Mammary epithelial cell (primary cell): ENCODE measurements at regions of chr16 and their contacts with region 1.

Region 1: DNA sequence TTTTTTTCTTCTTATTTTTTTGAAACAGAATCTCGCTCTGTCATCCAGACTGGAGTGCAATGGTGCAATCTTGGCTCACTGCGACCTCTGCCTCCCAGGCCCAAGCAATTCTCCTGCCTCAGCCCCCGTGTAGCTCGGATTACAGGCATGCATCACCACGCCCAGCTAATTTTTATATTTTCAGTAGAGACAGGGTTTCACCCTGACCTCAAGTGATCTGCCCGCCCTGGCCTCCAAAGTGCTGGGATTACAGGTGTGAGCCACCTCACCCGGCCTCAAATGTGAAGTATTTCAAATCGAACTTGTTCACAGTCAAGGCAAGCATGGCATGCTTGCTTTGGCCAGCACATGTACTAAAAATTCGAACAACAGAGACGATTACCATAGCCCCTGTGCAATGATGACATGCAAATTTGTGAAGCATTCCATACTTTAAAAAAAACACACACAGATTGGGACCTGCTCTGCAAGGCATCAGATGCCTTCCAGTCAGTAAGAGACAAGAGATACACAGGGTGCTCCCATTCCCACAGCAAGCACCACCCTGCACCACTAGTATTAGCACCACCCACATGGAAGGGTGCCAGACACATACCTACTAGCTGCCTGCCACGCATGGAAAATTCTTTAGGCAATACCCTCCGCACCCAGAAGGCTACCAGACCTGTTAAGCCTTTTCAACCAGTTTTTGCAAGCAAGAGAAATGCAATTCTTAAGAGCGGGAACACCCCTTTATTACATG is 47.2 kb downstream of the ANKRD11 start:
- DNase-seq: peak; percentile 88
- H3K4me3 ChIP-seq: peak overlapping the region in 1 of 3 experiments; percentile 24
- H3K27ac ChIP-seq: peak overlapping the region; percentile 93
- H3K4me1 ChIP-seq: peaks cover 47% of the 10 kb centered on the region
- H3K27me3 ChIP-seq: no peaks in the 10 kb centered on the region
- CTCF ChIP-seq: peak; percentile 25 to 48

Region 2: DNA sequence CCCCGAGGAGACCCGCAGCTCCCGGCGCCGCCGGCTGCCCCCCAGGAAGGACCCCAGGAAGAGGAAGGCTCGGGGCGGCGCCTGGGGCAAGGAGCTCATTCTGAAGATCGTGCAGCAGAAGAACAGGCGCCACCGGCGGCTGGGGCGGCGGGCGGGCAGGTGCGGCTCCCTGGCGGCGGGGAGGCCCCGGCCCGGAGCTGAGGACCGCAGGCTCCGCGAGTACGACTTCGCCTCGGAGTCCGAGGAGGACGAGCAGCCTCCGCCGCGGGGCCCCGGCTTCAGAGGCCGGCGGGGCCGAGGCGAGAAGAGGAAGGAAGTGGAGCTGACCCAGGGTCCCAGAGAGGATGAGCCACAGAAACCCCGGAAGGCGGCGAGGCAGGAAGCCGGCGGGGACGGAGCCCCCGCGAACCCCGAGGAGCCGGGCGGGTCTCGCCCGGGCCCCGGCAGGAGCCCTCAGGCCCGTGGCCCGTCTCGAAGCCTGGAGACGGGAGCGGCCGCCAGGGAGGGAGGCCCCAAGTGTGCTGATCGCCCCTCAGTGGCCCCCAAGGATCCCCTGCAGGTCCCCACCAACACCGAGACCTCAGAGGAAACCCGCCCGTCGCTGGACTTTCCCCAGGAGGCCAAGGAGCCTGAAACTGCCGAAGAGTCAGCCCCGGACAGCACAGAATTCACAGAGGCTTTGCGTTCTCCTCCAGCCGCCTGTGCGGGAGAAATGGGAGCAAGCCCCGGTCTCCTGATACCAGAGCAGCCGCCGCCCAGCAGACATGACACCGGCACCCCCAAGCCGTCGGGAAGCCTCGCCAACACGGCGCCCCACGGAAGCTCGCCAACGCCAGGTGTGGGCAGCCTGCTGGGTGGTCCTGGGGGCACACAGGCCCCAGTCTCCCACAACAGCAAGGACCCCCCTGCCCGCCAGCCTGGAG is 1012.4 kb before region 1 on chr16:
- CTCF ChIA-PET with region 1: no interaction called
- dilution Hi-C with region 1: no loop called
- in situ Hi-C with region 1: no loop called
- intact Hi-C with region 1: no loop called
- DNase-seq: no peak
- H3K4me3 ChIP-seq: no peak overlapping the region
- H3K27ac ChIP-seq: no peak overlapping the region
- H3K4me1 ChIP-seq: no peaks in the 10 kb centered on the region
- H3K27me3 ChIP-seq: peaks cover 1% of the 10 kb centered on the region
- CTCF ChIP-seq: no peak

Region 3: DNA sequence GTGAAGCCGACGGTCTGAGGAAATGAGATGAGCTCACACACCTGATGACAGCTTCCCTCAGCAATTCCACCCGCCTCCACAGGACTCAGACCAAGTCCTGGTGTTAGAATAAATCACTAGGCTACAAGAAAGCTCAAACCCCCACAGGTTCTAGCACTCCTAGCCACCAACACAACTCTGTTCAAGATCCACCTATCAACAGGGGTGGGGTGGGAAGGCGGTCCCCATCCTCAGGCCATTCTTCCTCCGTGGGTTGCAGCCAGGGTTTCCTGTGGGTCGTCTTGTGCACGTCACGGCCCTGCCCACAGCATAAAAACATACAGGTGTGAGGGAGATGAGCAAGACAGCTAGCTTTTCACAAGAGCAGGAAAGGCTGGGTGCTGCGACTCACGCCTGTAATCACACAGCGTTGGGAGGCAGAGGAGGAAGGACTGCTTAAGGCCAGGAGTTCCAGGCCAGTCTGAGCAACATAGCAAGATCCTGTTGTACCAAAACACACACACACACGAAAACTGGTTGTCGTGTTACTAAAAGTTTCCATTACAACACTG is 33.9 kb before region 1 on chr16:
- CTCF ChIA-PET with region 1: no interaction called
- dilution Hi-C with region 1: no loop called
- in situ Hi-C with region 1: no loop called
- intact Hi-C with region 1: loop called (anchors 2 kb)
- DNase-seq: peak; percentile 79
- H3K4me3 ChIP-seq: no peak overlapping the region
- H3K27ac ChIP-seq: peak overlapping the region; percentile 48
- H3K4me1 ChIP-seq: peaks cover 44% of the 10 kb centered on the region
- H3K27me3 ChIP-seq: no peaks in the 10 kb centered on the region
- CTCF ChIP-seq: no peak

Region 4: GRCh38 chr16:89458551-89458950 is 15.4 kb after region 1 on chr16:
- CTCF ChIA-PET with region 1: no interaction called
- dilution Hi-C with region 1: no loop called
- in situ Hi-C with region 1: no loop called
- intact Hi-C with region 1: loop called (anchors 2 kb)
- DNase-seq: peak; percentile 92
- H3K4me3 ChIP-seq: no peak overlapping the region
- H3K27ac ChIP-seq: peak overlapping the region; percentile 71
- H3K4me1 ChIP-seq: peaks cover 27% of the 10 kb centered on the region
- H3K27me3 ChIP-seq: no peaks in the 10 kb centered on the region
- CTCF ChIP-seq: peak in 1 of 2 donors; percentile 18

Region 5: DNA sequence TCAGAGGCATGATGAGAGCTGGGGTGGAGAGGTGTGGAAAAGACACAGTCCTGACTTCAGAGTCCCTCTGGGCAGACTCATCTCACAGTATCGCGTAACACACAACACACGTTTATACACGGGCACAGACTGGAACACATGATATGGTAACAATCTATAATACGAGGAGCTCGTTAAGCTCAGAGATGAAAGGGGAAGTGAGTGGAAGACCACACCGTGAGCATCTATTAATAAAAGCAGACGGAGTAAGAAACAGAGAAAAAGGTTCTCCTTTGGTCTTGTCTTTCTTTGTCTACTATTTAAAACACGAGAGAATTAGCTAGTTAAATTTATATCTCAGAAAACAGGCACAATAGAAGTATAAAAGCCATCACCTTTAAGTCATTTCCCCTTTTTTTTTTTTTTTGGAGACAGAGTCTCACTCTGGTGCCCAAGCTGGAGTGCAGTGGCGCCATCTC is 33.7 kb after region 1 on chr16:
- CTCF ChIA-PET with region 1: no interaction called
- dilution Hi-C with region 1: loop called (anchors 5 kb)
- in situ Hi-C with region 1: loop called in 1 of 2 experiments (anchors 5 kb)
- intact Hi-C with region 1: loop called (anchors 2 kb)
- DNase-seq: no peak
- H3K4me3 ChIP-seq: peak overlapping the region in 1 of 3 experiments; percentile 27
- H3K27ac ChIP-seq: peak overlapping the region; percentile 93
- H3K4me1 ChIP-seq: peaks cover 86% of the 10 kb centered on the region
- H3K27me3 ChIP-seq: no peaks in the 10 kb centered on the region
- CTCF ChIP-seq: no peak

Region 6: GRCh38 chr16:89490387-89491237 is 47.5 kb after region 1 on chr16 and contains the start of gene ANKRD11:
- CTCF ChIA-PET with region 1: no interaction called
- dilution Hi-C with region 1: no loop called
- in situ Hi-C with region 1: no loop called
- intact Hi-C with region 1: loop called (anchors 1 kb)
- DNase-seq: peak; percentile 100
- H3K4me3 ChIP-seq: peak within 1 kb of the TSS; percentile 83 to 89 (median 89)
- H3K27ac ChIP-seq: peak within 1 kb of the TSS; percentile 78
- H3K4me1 ChIP-seq: peaks cover 22% of the 10 kb centered on the region
- H3K27me3 ChIP-seq: no peaks in the 10 kb centered on the region
- CTCF ChIP-seq: no peak
- total RNA-seq, gene ANKRD11: 97.4 to 224 TPM

Region 7: GRCh38 chr16:89502319-89502878 is 59.2 kb after region 1 on chr16:
- CTCF ChIA-PET with region 1: no interaction called
- dilution Hi-C with region 1: no loop called
- in situ Hi-C with region 1: no loop called
- intact Hi-C with region 1: loop called (anchors 1 kb)
- DNase-seq: peak; percentile 95
- H3K4me3 ChIP-seq: no peak overlapping the region
- H3K27ac ChIP-seq: peak overlapping the region; percentile 42
- H3K4me1 ChIP-seq: peaks cover 28% of the 10 kb centered on the region
- H3K27me3 ChIP-seq: no peaks in the 10 kb centered on the region
- CTCF ChIP-seq: no peak

Region 8: GRCh38 chr16:90022209-90023064 is 579.3 kb after region 1 on chr16:
- CTCF ChIA-PET with region 1: no interaction called
- dilution Hi-C with region 1: no loop called
- in situ Hi-C with region 1: no loop called
- intact Hi-C with region 1: no loop called
- DNase-seq: peak; percentile 83
- H3K4me3 ChIP-seq: peak overlapping the region; percentile 68 to 81 (median 81)
- H3K27ac ChIP-seq: peak overlapping the region; percentile 63
- H3K4me1 ChIP-seq: peaks cover 33% of the 10 kb centered on the region
- H3K27me3 ChIP-seq: no peaks in the 10 kb centered on the region
- CTCF ChIP-seq: peak in 1 of 2 donors; percentile 3